Activated CD4-positive, alpha-beta memory T cell treated with anti-CD3 and anti-CD28 coated beads, Interleukin-2, amount 10 ng/mL, durations not matched to agents 7 days and 5 days (primary cell): ENCODE measurements at regions of chr7 and their contacts with region 1.

Region 1: DNA sequence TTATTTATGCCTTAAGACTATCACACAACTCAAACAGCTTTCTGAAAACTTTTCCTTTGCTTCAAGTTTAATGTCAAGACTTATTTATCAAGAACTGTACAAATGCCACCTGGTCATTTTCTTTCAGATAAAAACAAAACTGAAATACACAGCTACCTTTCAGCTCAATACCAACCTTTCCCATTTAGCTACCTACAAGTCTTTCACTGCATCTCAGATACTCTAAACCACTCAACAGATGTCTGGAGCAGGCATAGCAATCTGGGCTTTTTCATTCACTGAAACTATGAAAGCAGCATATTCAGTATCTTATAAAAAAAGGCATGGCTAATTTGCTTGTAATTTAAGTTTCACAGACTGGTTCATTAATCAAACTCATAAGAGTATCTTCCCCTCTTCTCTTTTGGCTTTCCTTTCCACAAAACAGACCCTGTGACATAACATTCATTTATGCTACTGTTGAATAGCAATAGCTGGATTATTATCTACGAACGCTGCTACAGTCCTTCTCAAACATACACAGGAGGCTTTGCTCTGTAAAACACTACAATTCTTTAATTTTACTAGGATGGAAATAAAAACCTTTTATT is 8.2 kb downstream of the TRA2A start:
- DNase-seq: no peak
- H3K4me3 Mint-ChIP-seq: no peak overlapping the region
- H3K27ac Mint-ChIP-seq: no peak overlapping the region
- H3K4me1 Mint-ChIP-seq: peaks cover 52% of the 10 kb centered on the region
- H3K27me3 Mint-ChIP-seq: no peaks in the 10 kb centered on the region

Region 2: GRCh38 chr7:23373151-23374004 is 150.2 kb before region 1 on chr7:
- CTCF ChIA-PET with region 1: no interaction called
- POLR2A ChIA-PET with region 1: no interaction called
- DNase-seq: peak; percentile 19
- H3K4me3 Mint-ChIP-seq: no peak overlapping the region
- H3K27ac Mint-ChIP-seq: no peak overlapping the region
- H3K4me1 Mint-ChIP-seq: peaks cover 25% of the 10 kb centered on the region
- H3K27me3 Mint-ChIP-seq: peaks cover 35% of the 10 kb centered on the region

Region 3: DNA sequence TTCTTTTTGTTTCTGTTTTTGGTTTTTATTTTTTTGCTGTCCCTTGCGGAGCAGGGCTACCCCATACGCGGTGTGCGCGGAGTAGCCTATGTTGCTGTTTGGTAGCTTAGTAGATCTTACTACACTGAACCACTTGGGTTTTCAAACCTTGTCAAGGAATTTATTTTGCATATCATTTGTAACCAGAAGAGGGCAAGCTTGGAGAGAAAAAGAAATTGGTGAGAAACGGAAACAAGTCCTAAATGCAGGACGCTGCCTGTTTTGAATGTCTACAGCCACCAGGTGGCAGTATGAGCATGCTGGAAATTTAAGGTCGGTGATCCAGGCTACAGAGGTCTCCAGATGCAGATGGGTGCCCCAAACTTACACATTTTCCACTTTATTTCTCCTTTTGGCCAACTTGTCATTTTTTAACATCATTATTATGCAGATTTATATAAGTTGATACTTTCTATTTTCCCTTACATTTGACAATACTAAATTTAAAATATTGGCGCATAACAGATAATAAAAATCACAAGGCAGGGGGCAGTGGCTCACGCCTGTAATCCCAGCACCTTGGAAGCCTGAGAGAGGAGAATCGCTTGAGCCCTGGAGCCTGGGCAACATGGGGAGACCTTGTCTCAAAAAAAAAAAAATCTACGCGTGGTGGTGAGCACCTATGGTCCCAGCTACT is 23.5 kb after region 1 on chr7:
- CTCF ChIA-PET with region 1: interaction called, 18 read pairs
- POLR2A ChIA-PET with region 1: interaction called, 32 read pairs
- DNase-seq: peak; percentile 81
- H3K4me3 Mint-ChIP-seq: no peak overlapping the region
- H3K27ac Mint-ChIP-seq: no peak overlapping the region
- H3K4me1 Mint-ChIP-seq: peaks cover 10% of the 10 kb centered on the region
- H3K27me3 Mint-ChIP-seq: no peaks in the 10 kb centered on the region